Common myeloid progenitor, CD34-positive (primary cell): ENCODE measurements at regions of chr20 and their contacts with region 1.

Region 1: GRCh38 chr20:59032023-59032712 is at the start of gene ATP5F1E:
- DNase-seq: peak; percentile 96 to 98 (median 98)
- H3K4me3 ChIP-seq: peak within 1 kb of the TSS; percentile 54 to 87 (median 79)
- H3K27ac ChIP-seq: peak within 1 kb of the TSS; percentile 53 to 85
- H3K4me1 ChIP-seq: peaks cover 17 to 37% (median 27%) of the 10 kb centered on the region in 4 experiments
- H3K27me3 ChIP-seq: no peaks in the 10 kb centered on the region

Region 2: GRCh38 chr20:58888521-58889333 is 143.4 kb before region 1 on chr20:
- CTCF ChIA-PET with region 1: no interaction called
- POLR2A ChIA-PET with region 1: interaction called, 11 read pairs
- DNase-seq: peak; percentile 83 to 91 (median 91)
- H3K4me3 ChIP-seq: peak overlapping the region; percentile 64 to 88 (median 80)
- H3K27ac ChIP-seq: peak overlapping the region in 1 of 2 experiments; percentile 76
- H3K4me1 ChIP-seq: peaks cover 9 to 29% (median 24%) of the 10 kb centered on the region in 4 experiments
- H3K27me3 ChIP-seq: no peaks in the 10 kb centered on the region

Region 3: DNA sequence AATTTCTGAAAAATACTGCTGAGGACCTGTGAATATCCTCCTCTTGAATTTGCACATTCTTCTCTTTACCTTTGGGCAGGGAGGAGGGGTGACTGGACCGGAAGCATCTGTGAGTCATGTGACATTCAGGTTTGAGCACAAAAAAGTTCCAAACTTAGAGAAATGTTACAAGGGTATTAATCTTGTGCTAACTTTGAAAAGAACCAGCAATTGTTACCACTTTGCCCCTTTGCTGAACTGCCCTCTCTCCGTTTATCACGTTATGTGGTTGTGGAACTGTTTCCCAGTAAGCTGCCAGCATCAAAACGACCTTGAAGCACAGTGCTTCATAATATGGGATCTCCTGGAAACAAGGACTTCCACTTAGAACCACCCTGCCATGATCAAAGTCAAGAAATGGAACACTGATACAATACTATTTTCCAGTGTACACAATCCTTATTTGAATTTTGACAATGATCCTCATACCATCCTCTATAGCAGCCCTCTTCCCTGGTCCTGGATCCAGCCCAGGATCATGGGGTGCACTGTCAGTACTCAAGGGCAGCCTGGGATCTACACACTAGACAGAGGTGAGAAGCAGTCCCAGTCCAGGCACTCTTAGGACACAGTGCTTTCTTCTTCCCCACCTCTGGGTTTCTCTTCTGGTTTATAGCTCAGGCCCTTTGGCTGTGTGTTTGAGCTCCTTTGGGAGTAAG is 15.2 kb before region 1 on chr20:
- CTCF ChIA-PET with region 1: interaction called, 12 read pairs
- POLR2A ChIA-PET with region 1: interaction called, 4 read pairs
- DNase-seq: peak; percentile 51 to 90 (median 84)
- H3K4me3 ChIP-seq: peak overlapping the region in 4 of 7 experiments; percentile 17 to 62 (median 44)
- H3K27ac ChIP-seq: peak overlapping the region in 1 of 2 experiments; percentile 60
- H3K4me1 ChIP-seq: peaks cover 11 to 66% (median 55%) of the 10 kb centered on the region in 4 experiments
- H3K27me3 ChIP-seq: no peaks in the 10 kb centered on the region

Region 4: GRCh38 chr20:59191756-59192532 is 159.8 kb after region 1 on chr20:
- CTCF ChIA-PET with region 1: no interaction called
- POLR2A ChIA-PET with region 1: no interaction called
- DNase-seq: no peak
- H3K4me3 ChIP-seq: no peak overlapping the region
- H3K27ac ChIP-seq: no peak overlapping the region
- H3K4me1 ChIP-seq: no peaks in the 10 kb centered on the region
- H3K27me3 ChIP-seq: peaks cover 0 to 27% (median 1%) of the 10 kb centered on the region in 5 experiments